Left ventricle myocardium superior (tissue), 1 donor: ENCODE measurements at regions of chrX and their contacts with region 1.

Region 1: GRCh38 chrX:129726307-129727111 is 12.3 kb upstream of the XPNPEP2 start:
- DNase-seq: peak; percentile 64
- ATAC-seq: peak; percentile 91

Region 2: GRCh38 chrX:129606918-129607317 is 119.6 kb before region 1 on chrX:
- intact Hi-C with region 1: loop called (anchors 10 kb)
- DNase-seq: no peak
- ATAC-seq: peak; percentile 67

Region 3: GRCh38 chrX:129637217-129638109 is 89.0 kb before region 1 on chrX:
- intact Hi-C with region 1: loop called (anchors 10 kb)
- DNase-seq: peak; percentile 78
- ATAC-seq: peak; percentile 82

Region 4: DNA sequence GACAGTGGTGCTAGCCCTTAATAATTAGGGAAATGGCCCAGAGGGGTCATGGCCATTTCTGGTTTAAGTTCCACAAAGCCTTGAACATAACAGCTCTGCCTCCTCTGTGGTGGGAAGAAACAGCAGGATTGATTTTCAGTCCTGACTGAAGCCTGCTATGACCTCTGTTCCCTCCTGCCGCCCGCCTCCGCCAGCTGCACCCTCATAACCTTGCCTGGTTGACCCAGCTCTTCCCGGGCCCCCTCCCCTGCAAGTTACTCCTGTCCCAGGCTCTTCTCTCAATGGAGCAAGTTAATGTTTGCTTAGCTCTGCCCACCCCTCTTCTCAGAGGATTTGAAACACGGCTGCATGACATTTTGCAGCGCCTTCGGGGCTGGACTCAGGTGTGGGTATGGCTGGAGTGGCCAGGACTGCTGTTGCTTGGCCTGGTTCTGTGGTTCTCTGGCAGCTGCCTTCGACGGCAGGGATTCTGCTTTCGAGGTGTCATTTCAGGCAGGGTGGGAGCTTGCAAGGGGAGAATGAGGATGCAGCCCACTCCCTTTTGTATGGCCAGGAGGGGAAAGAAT is 283.2 kb after region 1 on chrX:
- intact Hi-C with region 1: no loop called
- DNase-seq: no peak
- ATAC-seq: no peak

Region 5: DNA sequence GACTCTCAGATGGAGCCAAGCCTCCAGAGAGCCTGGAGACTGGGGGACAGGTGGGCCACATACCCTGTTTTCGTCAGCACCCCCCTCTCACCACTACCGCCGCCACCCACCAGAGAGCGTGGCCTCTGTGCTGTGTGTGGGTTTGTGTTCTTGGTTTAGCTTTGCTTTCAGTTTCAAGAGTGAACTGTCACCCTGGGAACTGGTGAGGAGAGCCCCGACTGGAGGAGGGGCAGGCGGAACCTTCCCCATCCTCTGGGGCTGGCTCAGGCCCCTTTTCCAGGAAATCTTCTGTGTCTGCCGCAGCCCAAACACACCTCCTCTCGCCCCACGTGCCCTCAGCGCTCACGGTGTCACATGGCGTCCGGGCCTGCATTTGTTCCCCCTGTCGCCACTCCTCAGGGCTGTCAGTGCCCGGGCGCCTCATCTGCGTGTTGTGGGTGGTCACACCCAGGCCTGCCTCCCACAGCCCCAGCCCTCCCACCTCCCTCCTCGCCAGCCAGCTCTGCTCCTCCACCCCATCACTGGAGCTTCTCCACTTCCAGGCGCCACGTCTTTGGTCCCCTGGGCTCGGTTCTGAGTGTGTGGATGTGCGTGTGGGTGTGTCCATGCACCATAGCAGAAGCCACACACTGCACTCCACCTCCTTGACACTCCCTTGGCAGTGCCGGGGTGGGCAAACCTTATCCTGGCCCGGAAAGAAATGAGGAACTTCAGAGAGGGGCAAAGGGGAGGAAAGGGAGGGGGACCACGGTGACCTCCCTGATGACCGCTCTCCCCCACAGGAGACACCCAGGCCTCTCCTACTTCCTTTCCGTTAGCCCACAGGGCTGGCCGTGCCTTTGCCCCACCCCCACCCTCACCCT is 356.0 kb after region 1 on chrX:
- intact Hi-C with region 1: no loop called
- DNase-seq: peak; percentile 48
- ATAC-seq: peak; percentile 70